Panc1 (cell line): ENCODE measurements at regions of chr17 and their contacts with region 1.

Region 1: GRCh38 chr17:31842183-31843069 is 16.6 kb downstream of the COPRS start:
- DNase-seq: peak; percentile 52
- ATAC-seq: peak; percentile 93
- H3K4me3 ChIP-seq: peak overlapping the region in 1 of 2 experiments; percentile 33; a peak in 2 of 4 replicates
- H3K27ac ChIP-seq: peak overlapping the region; percentile 82
- H3K4me1 ChIP-seq: peaks cover 19% of the 10 kb centered on the region
- H3K27me3 ChIP-seq: no peaks in the 10 kb centered on the region
- CTCF ChIP-seq: peak; percentile 97

Region 2: GRCh38 chr17:31558748-31559644 is 283.4 kb before region 1 on chr17:
- CTCF ChIA-PET with region 1: interaction called, 15 read pairs
- POLR2A ChIA-PET with region 1: no interaction called
- in situ Hi-C with region 1: no loop called
- intact Hi-C with region 1: loop called (anchors 1 kb)
- DNase-seq: no peak
- ATAC-seq: peak; percentile 92
- H3K4me3 ChIP-seq: peak overlapping the region; percentile 69 to 85
- H3K27ac ChIP-seq: peak overlapping the region; percentile 88
- H3K4me1 ChIP-seq: peaks cover 30% of the 10 kb centered on the region
- H3K27me3 ChIP-seq: no peaks in the 10 kb centered on the region
- CTCF ChIP-seq: peak; percentile 98